Activated CD8-positive, alpha-beta T cell treated with anti-CD3 and anti-CD28 coated beads for 36 hours (primary cell): ENCODE measurements at regions of chr1 and their contacts with region 1.

Region 1: DNA sequence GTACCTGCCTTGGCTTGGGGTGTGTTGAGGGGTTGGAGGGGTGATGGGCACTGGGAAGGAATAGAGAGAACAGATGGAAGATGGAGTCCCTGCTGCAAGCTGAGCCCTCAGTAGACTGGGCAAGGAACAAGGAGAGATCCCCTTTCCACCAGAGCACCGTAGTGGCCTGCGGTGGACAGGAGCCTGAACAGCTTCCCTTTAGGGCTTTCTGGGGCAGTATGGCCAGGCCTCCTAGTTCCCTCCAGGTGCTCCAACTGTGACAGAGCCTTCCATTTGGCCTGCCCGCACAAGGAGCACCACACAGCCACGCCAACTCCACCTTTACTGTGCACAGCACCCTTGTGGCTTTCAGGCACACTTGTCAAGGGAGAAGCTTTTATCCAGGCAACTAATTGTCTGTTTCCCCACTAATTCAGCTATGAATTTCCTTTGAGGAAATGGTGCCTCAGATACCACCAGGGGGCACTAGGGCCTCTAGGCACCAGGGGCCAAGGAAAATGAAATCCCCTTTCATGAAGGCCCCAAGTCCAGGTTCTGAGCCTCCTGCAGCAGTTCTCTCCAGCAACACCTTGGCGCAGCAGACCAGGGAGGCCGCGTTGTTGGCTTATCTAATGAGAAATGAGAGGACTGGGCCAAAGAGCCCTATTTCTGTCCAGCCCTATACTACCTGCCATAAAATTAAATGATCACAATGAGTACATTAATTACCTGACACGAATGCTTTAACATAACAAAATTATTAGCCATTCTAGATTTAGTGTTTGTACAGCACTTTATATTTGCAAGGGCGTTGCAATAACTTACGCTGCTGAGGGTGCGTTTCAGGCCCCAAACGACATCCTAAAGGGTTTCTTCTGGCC is 23.1 kb upstream of the ERI3 start:
- DNase-seq: peak; percentile 75
- ATAC-seq: peak; percentile 60
- H3K4me3 Mint-ChIP-seq: no peak overlapping the region
- H3K27ac Mint-ChIP-seq: no peak overlapping the region
- H3K4me1 Mint-ChIP-seq: no peaks in the 10 kb centered on the region
- H3K27me3 Mint-ChIP-seq: peaks cover 1% of the 10 kb centered on the region
- CTCF ChIP-seq: peak; percentile 73

Region 2: DNA sequence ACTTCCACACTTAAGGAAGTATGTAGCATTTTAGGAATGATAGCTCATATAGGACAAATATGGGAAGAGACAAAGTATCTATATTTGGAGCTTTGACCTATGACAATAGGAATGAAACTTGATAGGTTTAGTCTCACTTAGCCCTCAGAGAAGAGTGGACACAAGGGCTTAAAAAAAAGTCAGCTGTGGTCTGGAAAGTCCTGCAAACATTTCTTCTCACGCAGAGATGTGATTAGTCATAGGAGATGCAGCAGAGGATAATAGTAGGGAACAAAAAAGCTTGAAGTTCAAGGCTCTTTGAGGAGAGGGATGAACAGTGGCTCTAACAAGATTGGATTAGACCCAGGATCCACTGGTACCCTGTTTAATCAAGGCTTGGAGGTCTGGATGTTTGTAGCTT is 12.1 kb after region 1 on chr1:
- CTCF ChIA-PET with region 1: interaction called, 11 read pairs
- POLR2A ChIA-PET with region 1: no interaction called
- intact Hi-C with region 1: no loop called
- DNase-seq: no peak
- ATAC-seq: no peak
- H3K4me3 Mint-ChIP-seq: no peak overlapping the region
- H3K27ac Mint-ChIP-seq: no peak overlapping the region
- H3K4me1 Mint-ChIP-seq: no peaks in the 10 kb centered on the region
- H3K27me3 Mint-ChIP-seq: peaks cover 11% of the 10 kb centered on the region
- CTCF ChIP-seq: no peak